ENCODE measurements at regions of chr20 and their contacts with region 1.

Region 1: DNA sequence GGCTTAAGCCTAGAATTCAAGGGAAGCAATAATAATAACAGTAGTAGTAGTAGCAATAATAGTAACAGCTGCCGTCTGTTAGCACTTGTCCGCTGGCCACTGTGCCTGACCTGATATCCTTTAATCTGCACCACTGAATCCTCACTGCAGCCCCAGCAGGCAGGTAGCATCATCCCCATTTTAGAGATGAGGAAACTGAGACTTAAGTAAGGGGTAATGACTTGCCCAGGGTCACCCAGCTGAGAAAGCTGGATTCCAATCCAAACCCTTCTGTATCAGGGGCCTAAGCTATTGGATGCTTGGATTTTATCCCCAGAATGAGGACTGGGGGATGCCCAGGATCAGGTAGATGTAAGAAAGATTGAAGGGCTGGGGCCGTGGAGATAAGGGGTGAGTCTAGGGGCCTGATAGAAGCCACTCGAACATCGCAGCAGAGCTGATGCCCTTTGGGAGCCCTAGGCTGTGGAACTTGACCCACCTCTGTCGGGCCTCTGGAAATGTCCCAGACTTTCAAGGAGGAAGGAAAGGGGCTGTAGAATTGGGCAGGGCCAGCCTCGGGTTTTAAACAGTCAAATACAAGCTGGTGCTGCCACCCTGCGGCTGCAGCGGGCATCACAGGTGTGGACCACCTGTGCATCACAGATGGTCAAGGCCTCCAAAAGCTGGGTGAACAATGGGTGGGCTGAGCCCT is 102.1 kb upstream of the MYL9 start:
- DNase-seq: peak; percentile 40
- H3K4me3 ChIP-seq: no peak overlapping the region
- H3K27ac ChIP-seq: no peak overlapping the region
- H3K4me1 ChIP-seq: no peaks in the 10 kb centered on the region
- H3K27me3 ChIP-seq: no peaks in the 10 kb centered on the region
- CTCF ChIP-seq: peak; percentile 66 to 90 (median 79)
- POLR2A ChIP-seq: no peak

Region 2: GRCh38 chr20:36205026-36205425 is 234.2 kb before region 1 on chr20:
- intact Hi-C with region 1: loop called (anchors 5 kb)
- DNase-seq: no peak
- H3K4me3 ChIP-seq: no peak overlapping the region
- H3K27ac ChIP-seq: no peak overlapping the region
- H3K4me1 ChIP-seq: no peaks in the 10 kb centered on the region
- H3K27me3 ChIP-seq: no peaks in the 10 kb centered on the region
- CTCF ChIP-seq: no peak
- POLR2A ChIP-seq: no peak

Region 3: GRCh38 chr20:36273414-36274180 is 165.6 kb before region 1 on chr20:
- intact Hi-C with region 1: loop called (anchors 10 kb)
- DNase-seq: no peak
- H3K4me3 ChIP-seq: no peak overlapping the region
- H3K27ac ChIP-seq: no peak overlapping the region
- H3K4me1 ChIP-seq: no peaks in the 10 kb centered on the region
- H3K27me3 ChIP-seq: no peaks in the 10 kb centered on the region
- CTCF ChIP-seq: peak in 1 of 4 experiments; percentile 12
- POLR2A ChIP-seq: no peak

Region 4: DNA sequence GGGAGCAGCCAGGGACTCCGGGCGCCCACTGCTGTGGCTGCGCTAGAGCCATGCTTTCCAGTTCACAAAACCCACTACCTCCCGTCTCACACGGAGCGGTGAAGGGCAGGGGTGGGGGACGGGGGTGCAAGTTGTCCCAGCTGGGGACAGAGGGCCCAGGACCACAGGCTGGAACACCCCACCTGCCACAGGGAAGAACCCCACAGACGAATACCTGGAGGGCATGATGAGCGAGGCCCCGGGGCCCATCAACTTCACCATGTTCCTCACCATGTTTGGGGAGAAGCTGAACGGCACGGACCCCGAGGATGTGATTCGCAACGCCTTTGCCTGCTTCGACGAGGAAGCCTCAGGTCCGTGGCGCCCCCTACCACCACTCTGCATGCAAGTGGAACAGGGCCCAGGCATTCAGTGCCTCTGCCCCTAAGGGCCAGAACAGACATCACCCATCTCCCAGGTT is 108.7 kb after region 1 on chr20:
- intact Hi-C with region 1: no loop called
- DNase-seq: no peak
- H3K4me3 ChIP-seq: no peak overlapping the region
- H3K27ac ChIP-seq: no peak overlapping the region
- H3K4me1 ChIP-seq: no peaks in the 10 kb centered on the region
- H3K27me3 ChIP-seq: no peaks in the 10 kb centered on the region
- CTCF ChIP-seq: no peak
- POLR2A ChIP-seq: no peak

Region 5: GRCh38 chr20:36562724-36563123 is 123.5 kb after region 1 on chr20:
- intact Hi-C with region 1: no loop called
- DNase-seq: no peak
- H3K4me3 ChIP-seq: no peak overlapping the region
- H3K27ac ChIP-seq: no peak overlapping the region
- H3K4me1 ChIP-seq: no peaks in the 10 kb centered on the region
- H3K27me3 ChIP-seq: no peaks in the 10 kb centered on the region
- CTCF ChIP-seq: no peak
- POLR2A ChIP-seq: no peak

Region 6: DNA sequence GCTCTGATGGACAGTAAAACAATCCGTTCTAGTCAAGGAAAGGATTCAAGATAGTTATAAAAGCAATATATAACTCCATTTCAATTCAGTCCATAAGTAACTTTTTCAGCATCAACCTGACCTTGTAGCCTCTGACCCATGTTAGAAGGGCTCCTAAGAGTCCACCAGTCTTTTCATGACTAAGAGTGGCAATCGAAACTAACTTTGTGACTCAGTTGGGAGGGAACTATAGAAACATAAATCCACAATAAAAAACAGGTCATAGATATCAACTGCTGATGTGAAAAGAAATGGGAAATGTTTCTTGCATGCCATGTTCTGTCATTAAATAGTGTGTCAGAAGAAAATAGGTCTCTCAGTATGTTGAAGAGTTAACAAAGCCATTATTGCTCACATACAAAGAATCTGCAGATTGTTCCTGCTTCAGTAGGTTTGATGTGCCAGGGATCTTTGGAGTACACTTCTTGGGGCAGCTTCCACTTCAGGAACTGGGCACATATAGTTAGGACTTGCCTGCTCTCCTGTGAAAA is 672.8 kb after region 1 on chr20:
- intact Hi-C with region 1: no loop called
- DNase-seq: no peak
- H3K4me3 ChIP-seq: no peak overlapping the region
- H3K27ac ChIP-seq: no peak overlapping the region
- H3K4me1 ChIP-seq: no peaks in the 10 kb centered on the region
- H3K27me3 ChIP-seq: no peaks in the 10 kb centered on the region
- CTCF ChIP-seq: no peak
- POLR2A ChIP-seq: no peak

Measured in prostate gland (tissue), 2 donors.